ENCODE measurements at regions of chr16 and their contacts with region 1.

Region 1: GRCh38 chr16:82653550-82654511 is 27.1 kb downstream of the CDH13 start:
- DNase-seq: peak; percentile 72
- ATAC-seq: peak; percentile 77
- H3K4me3 Mint-ChIP-seq: peak overlapping the region; percentile 37
- H3K27ac Mint-ChIP-seq: peak overlapping the region; percentile 88
- H3K4me1 Mint-ChIP-seq: peaks cover 88% of the 10 kb centered on the region
- H3K27me3 Mint-ChIP-seq: peaks cover 2% of the 10 kb centered on the region

Region 2: GRCh38 chr16:82169861-82170845 is 483.7 kb before region 1 on chr16 and contains the start of gene MPHOSPH6:
- CTCF ChIA-PET with region 1: interaction called, 3 read pairs
- POLR2A ChIA-PET with region 1: interaction called, 3 read pairs
- intact Hi-C with region 1: loop called (anchors 5 to 10 kb)
- DNase-seq: peak; percentile 95
- ATAC-seq: peak; percentile 94
- H3K4me3 Mint-ChIP-seq: peak within 1 kb of the TSS; percentile 96
- H3K27ac Mint-ChIP-seq: peak within 1 kb of the TSS; percentile 97
- H3K4me1 Mint-ChIP-seq: peaks cover 31% of the 10 kb centered on the region
- H3K27me3 Mint-ChIP-seq: peaks cover 25% of the 10 kb centered on the region
- total RNA-seq, gene MPHOSPH6: 48.0 to 48.7 TPM

Region 3: DNA sequence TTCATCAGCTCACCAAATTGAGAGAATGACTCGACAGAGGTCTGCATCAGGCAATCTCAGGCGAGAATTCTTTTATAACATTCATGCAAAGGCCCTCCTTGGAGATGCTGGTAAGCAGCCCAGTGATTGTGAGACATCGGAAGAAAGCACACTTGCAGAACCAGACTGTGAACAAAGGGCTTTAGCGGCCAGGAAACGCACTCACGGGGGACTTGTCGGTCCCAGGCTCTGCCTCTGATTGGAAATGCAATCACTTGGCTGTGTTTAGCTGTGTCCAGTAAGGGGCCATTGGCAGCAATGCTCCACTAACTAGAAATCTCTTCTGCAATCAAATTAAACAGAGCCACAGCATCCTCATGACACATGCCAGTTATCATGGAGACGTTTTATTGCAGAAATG is 253.8 kb before region 1 on chr16:
- CTCF ChIA-PET with region 1: no interaction called
- POLR2A ChIA-PET with region 1: no interaction called
- intact Hi-C with region 1: no loop called
- DNase-seq: no peak
- ATAC-seq: no peak
- H3K4me3 Mint-ChIP-seq: no peak overlapping the region
- H3K27ac Mint-ChIP-seq: no peak overlapping the region
- H3K4me1 Mint-ChIP-seq: no peaks in the 10 kb centered on the region
- H3K27me3 Mint-ChIP-seq: peaks cover 10% of the 10 kb centered on the region

Region 4: GRCh38 chr16:82456683-82457082 is 197.1 kb before region 1 on chr16:
- CTCF ChIA-PET with region 1: no interaction called
- POLR2A ChIA-PET with region 1: no interaction called
- intact Hi-C with region 1: no loop called
- DNase-seq: peak; percentile 70
- ATAC-seq: peak; percentile 70
- H3K4me3 Mint-ChIP-seq: no peak overlapping the region
- H3K27ac Mint-ChIP-seq: no peak overlapping the region
- H3K4me1 Mint-ChIP-seq: no peaks in the 10 kb centered on the region
- H3K27me3 Mint-ChIP-seq: peaks cover 7% of the 10 kb centered on the region

Region 5: GRCh38 chr16:82639666-82640336 is 14.0 kb before region 1 on chr16:
- CTCF ChIA-PET with region 1: interaction called, 7 read pairs
- POLR2A ChIA-PET with region 1: no interaction called
- intact Hi-C with region 1: loop called (anchors 1 to 2 kb)
- DNase-seq: peak; percentile 78
- ATAC-seq: peak; percentile 47
- H3K4me3 Mint-ChIP-seq: no peak overlapping the region
- H3K27ac Mint-ChIP-seq: no peak overlapping the region
- H3K4me1 Mint-ChIP-seq: peaks cover 15% of the 10 kb centered on the region
- H3K27me3 Mint-ChIP-seq: peaks cover 5% of the 10 kb centered on the region

Region 6: DNA sequence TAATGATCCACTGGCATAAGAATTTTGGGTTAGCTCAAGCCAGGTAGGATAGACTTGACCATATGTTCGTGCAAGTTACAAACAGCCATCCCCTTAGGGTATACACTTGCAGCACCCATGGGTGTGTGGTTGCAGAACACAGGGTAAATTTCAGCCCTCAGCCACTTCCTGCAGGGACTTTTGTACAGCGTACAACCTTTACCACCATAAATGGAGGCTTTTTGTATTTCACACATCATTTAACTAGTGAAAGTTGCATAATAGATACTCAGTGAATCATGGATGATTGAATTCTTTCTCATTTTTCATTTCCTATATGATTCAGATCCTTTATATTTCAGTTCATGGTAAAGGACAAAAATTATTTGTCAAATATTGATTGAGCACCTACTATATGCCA is 446.8 kb after region 1 on chr16:
- CTCF ChIA-PET with region 1: no interaction called
- POLR2A ChIA-PET with region 1: no interaction called
- intact Hi-C with region 1: loop called in 1 of 2 experiments (anchors 2 kb)
- DNase-seq: peak; percentile 24
- ATAC-seq: peak; percentile 80
- H3K4me3 Mint-ChIP-seq: no peak overlapping the region
- H3K27ac Mint-ChIP-seq: no peak overlapping the region
- H3K4me1 Mint-ChIP-seq: no peaks in the 10 kb centered on the region
- H3K27me3 Mint-ChIP-seq: peaks cover 21% of the 10 kb centered on the region